ENCODE measurements at regions of chr10 and their contacts with region 1.

Region 1: DNA sequence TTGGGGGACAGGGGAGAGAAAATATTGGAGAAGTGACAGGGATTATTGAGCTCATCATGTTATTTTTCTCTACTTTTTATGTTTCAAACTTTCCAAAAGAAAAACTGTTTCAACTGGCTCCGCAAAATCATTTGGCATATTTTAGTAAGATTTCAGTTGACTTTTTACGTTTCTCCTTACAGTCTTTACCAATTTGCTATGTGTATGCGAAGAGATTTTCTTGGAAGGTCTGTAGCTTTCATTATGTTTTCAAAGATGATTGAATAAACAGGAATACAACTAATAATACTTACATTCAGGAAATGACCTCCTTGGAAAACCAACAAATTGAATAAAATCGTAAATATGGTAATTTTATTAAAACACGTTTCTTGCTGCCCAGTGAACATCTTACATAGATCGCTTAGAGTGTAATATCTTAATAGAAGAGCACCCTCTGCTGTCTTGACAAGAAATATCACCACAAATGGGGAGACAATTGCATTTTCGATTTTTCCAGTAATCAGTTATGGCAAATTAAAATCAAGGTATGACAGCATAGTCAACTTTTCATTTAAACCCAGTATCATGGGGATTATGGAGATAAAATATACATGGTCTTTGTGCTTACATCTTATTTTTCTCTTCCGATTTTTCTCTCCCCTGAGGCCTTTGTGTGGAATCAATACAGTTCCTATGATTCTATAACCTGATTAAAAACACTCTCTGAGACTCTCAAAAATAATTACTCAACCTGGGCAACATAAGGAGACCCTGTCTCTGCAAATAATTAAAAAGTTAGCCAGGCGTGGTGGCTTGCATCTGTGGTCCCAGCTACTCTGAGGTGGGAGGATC is 43.1 kb downstream of the MBL2 start:
- DNase-seq: no peak
- H3K4me3 ChIP-seq: no peak overlapping the region
- CTCF ChIP-seq: no peak
- POLR2A ChIP-seq: no peak

Region 2: DNA sequence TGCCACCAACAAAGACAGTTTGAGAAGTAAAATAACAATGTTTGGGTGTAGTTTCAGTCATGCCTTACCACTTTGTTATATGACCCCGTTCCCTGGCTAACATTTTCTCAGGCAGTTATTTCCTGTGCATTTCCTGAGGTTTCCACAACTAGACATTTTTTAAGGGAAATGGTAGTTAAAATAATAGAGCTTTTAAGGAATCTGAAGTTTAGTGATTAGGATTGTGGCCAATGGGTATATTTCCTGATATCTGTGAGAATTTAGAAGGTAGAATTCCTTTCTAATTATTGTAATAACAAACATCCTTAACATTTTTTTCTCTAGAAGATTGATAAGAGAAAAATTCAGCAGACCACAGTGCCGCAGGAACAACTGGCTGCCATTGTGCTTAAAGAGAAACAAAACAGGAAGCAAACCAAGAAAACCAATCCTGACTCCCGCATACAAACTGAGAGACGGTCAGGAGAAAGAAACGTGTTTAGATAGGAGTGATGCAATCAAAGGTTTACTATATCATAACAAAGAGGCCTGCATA is 150.6 kb before region 1 on chr10:
- intact Hi-C with region 1: no loop called
- DNase-seq: no peak
- H3K4me3 ChIP-seq: no peak overlapping the region
- CTCF ChIP-seq: no peak
- POLR2A ChIP-seq: no peak

Region 3: GRCh38 chr10:52801947-52802346 is 72.5 kb after region 1 on chr10:
- intact Hi-C with region 1: loop called (anchors 2 kb)
- DNase-seq: no peak
- H3K4me3 ChIP-seq: no peak overlapping the region
- CTCF ChIP-seq: no peak
- POLR2A ChIP-seq: no peak